ENCODE measurements at regions of chr15 and their contacts with region 1.

Region 1: DNA sequence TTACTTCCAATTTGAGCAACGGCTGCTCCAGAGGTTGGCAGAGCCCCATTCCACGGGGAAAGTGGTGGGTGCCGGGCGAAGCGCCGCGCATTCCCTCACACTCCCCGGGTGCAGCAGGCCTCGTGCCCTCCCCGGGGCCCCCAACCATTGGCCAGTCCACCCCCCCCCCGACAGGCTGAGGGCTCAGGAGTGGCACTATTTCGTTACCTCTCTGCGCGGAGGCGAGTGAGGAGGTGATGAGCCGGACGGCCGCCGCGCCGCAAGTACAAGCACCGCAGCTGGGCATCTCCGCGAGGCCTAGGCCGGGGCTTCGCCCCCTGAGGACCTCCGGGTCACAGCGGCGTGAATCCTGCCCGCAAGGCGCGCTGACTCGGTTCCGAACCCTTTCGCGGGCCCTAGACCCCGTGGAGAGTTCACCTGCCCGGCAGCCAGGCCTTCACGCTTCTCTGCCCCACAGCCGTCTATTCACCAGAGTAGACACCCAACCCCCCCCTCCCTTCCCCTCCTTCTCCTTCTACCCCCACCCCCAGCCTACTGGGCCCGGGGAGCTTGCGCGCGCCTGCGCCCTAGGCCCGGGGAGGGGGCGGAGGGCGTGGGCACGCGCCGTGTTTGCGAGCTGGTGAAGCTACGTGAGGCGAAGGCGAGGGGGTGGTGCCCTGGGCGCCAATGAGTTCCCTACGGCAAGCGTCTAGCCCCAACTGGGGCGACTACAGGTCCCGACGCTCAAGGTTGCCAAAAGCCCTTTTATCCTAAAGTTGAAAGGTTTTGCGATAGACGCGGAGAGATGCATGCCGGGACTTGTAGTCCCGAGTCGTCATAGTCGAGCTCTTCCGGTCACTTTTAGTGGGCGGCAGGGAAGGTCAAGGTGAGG is at the start of gene CLPX:
- ATAC-seq: peak; percentile 68 to 89 (median 86)
- H3K4me3 ChIP-seq: peak within 1 kb of the TSS; percentile 63 to 89 (median 86)
- H3K27ac ChIP-seq: peak within 1 kb of the TSS; percentile 91
- H3K4me1 ChIP-seq: peaks cover 7 to 11% of the 10 kb centered on the region in 2 donors
- total RNA-seq, gene CLPX: 25.5 to 76.3 (median 31.0) TPM

Region 2: DNA sequence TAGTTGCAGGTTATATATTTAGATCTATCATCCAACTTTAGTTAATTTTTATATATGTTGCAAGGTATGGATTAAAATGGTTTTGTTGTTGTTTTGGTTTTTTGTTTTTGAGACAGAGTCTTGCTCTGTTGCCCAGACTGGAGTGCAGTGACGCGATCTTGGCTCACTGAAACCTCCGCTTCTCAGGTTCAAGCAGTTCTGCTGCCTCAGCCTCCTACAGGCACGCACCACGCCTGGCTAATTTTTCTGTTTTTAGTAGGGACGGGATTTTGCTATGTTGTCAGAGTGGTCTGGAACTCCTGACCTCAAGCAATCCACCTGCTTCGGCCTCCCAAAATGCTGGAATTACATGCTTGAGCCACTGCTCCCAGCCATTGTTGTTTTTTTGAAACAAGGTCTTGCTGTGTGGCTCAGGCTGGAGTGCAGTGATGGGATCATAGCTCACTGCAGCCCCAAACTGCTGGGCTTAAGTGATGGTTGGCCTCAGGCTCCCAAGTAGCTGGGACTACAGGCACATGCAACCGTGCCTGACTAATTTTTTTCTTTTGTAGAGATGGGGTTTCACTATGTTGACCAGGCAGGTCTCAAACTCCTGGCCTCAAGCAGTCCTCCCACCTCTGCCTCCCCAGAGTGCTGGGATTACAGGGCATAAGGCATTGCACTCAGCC is 632.7 kb before region 1 on chr15:
- in situ Hi-C with region 1: no loop called
- ATAC-seq: no peak
- H3K4me3 ChIP-seq: no peak overlapping the region
- H3K27ac ChIP-seq: no peak overlapping the region
- H3K4me1 ChIP-seq: no peaks in the 10 kb centered on the region

Region 3: DNA sequence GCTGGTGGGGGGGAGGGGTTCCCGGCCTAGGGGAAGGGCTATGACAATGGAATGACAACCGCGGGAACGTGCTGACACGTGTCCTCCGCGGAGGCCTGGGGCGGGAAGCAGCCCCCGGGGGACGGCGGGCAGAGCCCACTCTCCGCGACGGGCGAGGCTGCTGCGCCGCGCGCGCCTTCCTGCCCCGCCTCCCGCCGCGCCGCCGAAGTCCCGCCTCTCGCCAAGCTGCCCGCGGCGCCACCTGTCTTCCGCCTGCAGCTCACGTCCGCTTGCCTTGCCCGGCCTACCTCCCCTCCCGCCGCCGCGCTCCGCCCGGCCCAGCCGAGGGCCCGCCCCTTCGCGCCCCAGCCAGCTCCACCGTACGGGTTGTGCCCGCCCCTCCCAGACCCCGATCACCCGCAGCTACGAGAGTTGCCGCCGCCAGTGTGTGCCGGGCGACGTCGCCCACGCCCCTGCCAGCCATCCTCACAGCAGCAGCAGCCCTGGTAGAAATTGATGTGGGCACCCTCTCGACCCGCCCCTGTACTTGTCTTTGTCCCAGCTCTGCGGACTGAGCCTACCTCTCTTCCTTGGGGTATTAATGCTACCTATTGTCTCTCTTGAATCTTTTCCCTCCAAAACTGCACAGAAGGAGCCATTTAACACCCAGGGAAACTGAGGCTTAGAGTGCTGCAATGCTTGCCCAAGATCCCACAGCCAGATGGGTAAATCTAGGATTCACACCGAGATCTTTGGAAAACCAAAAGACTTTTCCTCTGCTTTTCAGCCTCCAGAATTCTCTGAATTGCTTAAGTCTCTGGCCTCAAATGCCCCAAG is 101.8 kb after region 1 on chr15 and contains the start of gene PARP16:
- in situ Hi-C with region 1: loop called in 5 of 9 experiments (anchors 10 to 25 kb)
- ATAC-seq: peak; percentile 88 to 96 (median 90)
- H3K4me3 ChIP-seq: peak within 1 kb of the TSS; percentile 36 to 64 (median 53)
- H3K27ac ChIP-seq: peak within 1 kb of the TSS; percentile 87 to 95
- H3K4me1 ChIP-seq: peaks cover 19 to 20% of the 10 kb centered on the region in 2 donors
- total RNA-seq, gene PARP16: 2.7 to 15.3 (median 6.7) TPM

Region 4: GRCh38 chr15:65292938-65293518 is 107.9 kb after region 1 on chr15:
- in situ Hi-C with region 1: loop called in 5 of 9 experiments (anchors 10 to 25 kb)
- ATAC-seq: no peak
- H3K4me3 ChIP-seq: no peak overlapping the region
- H3K27ac ChIP-seq: no peak overlapping the region
- H3K4me1 ChIP-seq: peaks cover 10 to 13% of the 10 kb centered on the region in 2 donors

Region 5: GRCh38 chr15:65384895-65385858 is 200.1 kb after region 1 on chr15:
- in situ Hi-C with region 1: loop called in 3 of 9 experiments (anchors 25 kb)
- ATAC-seq: peak; percentile 78 to 95 (median 84)
- H3K4me3 ChIP-seq: no peak overlapping the region
- H3K27ac ChIP-seq: peak overlapping the region; percentile 60 to 70
- H3K4me1 ChIP-seq: peaks cover 30 to 47% of the 10 kb centered on the region in 2 donors